ENCODE measurements at regions of chr3 and their contacts with region 1.

Region 1: DNA sequence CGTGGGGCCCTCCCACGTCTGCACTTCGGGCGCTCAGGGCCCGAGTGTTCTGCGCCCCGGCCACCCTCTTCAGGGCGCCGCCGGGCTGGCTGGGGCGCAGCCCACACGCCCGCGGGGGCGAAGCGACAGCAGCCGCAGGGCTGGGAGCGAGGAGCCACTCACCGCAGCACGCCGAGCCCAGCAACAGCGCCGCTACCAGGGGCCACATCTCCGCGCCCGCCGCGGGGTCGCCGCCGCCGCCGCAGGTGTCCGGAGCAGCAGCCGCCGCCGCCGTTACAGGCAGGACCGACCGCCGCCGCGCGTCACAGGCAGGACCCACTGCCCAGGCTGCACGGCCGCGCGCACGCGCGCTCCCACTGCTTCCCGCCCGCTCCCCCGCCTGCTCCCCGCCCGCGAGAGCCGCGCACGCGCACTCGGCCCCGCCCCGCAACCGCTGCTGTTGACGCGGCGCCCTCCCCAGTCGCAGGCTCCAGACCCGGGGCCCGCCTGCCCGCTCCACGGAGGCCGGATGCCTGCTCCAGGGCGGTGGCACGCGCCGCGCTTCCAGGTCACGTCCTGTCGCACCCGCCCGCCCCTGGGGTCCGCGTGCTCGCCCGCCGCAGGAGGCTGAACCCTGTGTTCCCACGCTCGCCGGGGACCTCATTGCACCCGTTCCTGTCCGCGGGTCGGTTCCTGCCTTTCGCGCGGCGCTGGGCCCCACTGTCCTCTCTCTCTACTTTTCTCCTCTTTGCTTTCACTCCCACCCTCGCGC is at the start of gene CD47:
- DNase-seq: peak; percentile 94
- H3K4me3 ChIP-seq: peak within 1 kb of the TSS; percentile 82 to 93 (median 90)
- H3K27ac ChIP-seq: peak within 1 kb of the TSS; percentile 51
- H3K4me1 ChIP-seq: peaks cover 12% of the 10 kb centered on the region
- H3K27me3 ChIP-seq: peaks cover 2 to 6% of the 10 kb centered on the region in 2 experiments
- CTCF ChIP-seq: no peak
- POLR2A ChIP-seq: peak; percentile 74
- total RNA-seq, gene CD47: 30.3 and 32.2 TPM in 2 replicates

Region 2: DNA sequence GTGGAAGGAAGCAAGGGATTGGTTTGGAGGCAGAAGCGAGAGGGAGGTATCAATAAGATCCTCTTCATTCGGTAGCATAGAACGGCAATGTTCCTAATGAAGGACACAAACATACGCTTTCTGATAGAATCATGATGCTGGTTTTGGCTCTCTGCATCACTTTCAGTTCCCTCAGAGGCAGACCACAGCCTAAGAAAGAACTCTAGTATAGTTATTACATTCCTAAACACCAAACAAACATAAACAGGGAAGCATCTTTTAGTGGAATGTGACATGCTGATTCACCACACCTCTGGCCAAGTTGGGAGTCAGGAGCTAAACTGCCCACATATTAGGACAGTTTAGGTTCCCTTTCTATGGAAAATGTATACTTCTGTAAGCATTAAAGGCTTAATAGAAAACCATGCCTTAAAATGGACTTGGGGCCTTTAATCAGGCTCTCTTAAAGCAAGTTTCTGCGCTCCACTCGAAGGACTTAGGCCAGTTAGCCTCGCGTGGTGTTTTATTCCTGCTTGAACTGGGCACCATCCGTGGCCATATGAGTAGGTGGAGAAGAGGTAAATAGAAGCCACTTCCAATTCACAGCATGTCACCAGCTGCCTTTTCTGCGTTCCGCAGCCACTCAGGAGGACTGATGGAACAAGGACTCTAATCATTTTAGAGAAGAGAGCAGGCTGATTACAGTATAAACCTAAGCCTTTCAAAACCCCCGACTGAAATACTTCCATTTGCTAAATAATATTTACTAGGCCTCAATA is 53.7 kb before region 1 on chr3:
- CTCF ChIA-PET with region 1: no interaction called
- POLR2A ChIA-PET with region 1: no interaction called
- dilution Hi-C with region 1: no loop called
- intact Hi-C with region 1: loop called (anchors 2 kb)
- DNase-seq: no peak
- H3K4me3 ChIP-seq: no peak overlapping the region
- H3K27ac ChIP-seq: no peak overlapping the region
- H3K4me1 ChIP-seq: peaks cover 21% of the 10 kb centered on the region
- H3K27me3 ChIP-seq: no peaks in the 10 kb centered on the region
- CTCF ChIP-seq: no peak
- POLR2A ChIP-seq: no peak

Region 3: DNA sequence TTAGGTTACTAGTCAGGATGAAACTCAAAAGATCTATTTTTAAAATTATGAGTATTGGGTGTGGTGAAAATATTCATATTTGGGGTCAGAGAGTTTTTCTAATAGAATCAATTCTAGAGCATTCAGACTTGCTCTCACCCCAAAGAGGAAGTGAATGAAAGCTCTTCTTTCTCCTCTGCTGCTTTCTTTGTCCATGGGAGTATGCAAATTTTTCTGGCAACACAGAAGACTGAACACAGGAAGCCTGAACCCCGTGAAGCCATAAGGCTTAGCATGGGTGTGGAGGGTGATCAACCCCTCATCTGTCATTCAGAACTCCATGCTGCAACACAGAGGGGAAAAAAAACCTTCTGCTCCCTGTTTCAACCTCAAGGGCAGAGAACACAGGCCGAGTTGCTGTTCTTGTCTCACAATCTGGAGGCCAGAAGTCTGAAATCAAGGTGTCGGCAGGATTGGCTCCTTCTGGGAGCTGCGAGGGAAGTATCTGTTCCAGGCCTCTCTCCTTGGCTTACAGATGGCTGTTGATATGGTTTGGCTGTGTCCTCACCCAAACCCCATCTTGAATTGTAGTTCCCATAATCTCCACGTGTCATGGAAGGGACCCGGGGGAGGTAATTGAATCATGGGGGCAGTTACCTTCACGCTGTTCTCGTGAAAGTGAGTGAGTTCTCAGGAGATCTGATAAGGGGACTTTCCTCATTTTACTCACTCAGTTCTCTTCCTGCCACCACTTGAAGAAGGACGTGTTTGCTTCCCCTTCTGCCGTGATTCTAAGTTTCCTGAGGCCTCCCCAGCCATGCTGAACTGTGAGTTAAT is 33.7 kb after region 1 on chr3:
- CTCF ChIA-PET with region 1: no interaction called
- POLR2A ChIA-PET with region 1: no interaction called
- dilution Hi-C with region 1: no loop called
- intact Hi-C with region 1: loop called (anchors 1 kb)
- DNase-seq: peak; percentile 30
- H3K4me3 ChIP-seq: no peak overlapping the region
- H3K27ac ChIP-seq: no peak overlapping the region
- H3K4me1 ChIP-seq: peaks cover 19% of the 10 kb centered on the region
- H3K27me3 ChIP-seq: peaks cover 0 to 3% of the 10 kb centered on the region in 2 experiments
- CTCF ChIP-seq: no peak
- POLR2A ChIP-seq: no peak

Region 4: DNA sequence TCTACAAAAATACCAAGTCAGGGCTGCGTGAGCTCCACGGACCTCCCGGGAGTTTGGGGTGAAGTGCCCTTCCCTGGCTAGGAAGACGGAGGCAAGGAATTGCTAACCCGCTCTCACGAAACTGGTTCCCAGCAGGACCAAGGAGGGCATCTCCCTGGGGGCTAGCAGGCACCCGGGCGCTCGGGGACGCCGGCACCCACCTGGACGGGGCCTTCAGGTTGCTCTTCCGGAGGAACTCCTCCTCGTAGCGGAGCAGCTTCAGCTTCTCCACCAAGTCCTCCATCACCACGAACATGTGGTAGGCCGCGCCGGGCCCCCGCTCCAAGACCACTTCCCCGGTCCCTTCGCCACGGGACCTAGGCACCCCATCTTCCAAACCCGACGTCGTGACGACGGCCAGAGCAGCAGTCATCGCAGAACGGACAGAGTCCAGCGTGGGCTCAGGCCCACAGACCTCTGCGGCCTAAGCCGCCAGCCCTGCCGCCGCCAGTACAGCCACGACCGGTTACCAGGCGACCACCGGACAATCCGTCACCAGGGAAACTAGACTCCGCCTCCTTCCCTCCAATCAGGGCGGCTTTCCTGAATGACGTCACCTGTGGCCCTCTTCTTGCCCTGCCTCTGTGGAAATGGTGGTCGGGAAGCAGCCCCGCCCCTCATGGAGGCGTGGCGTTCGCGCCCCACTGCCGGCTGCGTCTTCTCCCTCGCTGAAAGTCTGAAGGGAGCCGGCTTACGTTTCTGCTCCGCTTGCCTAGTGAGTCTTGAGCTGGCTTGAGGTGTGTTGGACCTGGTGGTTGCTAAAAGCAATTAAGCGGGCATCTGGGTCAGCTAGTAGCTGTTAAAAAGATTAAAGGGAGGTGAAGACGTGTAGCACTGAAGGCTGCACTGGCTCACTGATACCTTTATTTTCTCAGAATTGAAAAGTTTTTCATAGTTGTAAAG is 131.3 kb after region 1 on chr3 and contains the start of gene IFT57:
- CTCF ChIA-PET with region 1: no interaction called
- POLR2A ChIA-PET with region 1: no interaction called
- dilution Hi-C with region 1: no loop called
- intact Hi-C with region 1: loop called (anchors 1 kb)
- DNase-seq: peak; percentile 99
- H3K4me3 ChIP-seq: peak within 1 kb of the TSS; percentile 66 to 87 (median 82)
- H3K27ac ChIP-seq: peak within 1 kb of the TSS; percentile 68
- H3K4me1 ChIP-seq: peaks cover 21% of the 10 kb centered on the region
- H3K27me3 ChIP-seq: no peaks in the 10 kb centered on the region
- CTCF ChIP-seq: no peak
- POLR2A ChIP-seq: peak; percentile 36
- total RNA-seq, gene IFT57: 23.4 and 25.1 TPM in 2 replicates